Right cardiac atrium (tissue), 5 donors: ENCODE measurements at regions of chr15 and their contacts with region 1.

Region 1: GRCh38 chr15:74768771-74769342 is 13.0 kb upstream of the CSK start:
- DNase-seq: peak; percentile 67 to 85 (median 78)
- ATAC-seq: peak; percentile 33 to 60
- H3K4me3 ChIP-seq: no peak overlapping the region
- H3K27ac ChIP-seq: no peak overlapping the region
- H3K4me1 ChIP-seq: no peaks in the 10 kb centered on the region
- H3K27me3 ChIP-seq: no peaks in the 10 kb centered on the region

Region 2: DNA sequence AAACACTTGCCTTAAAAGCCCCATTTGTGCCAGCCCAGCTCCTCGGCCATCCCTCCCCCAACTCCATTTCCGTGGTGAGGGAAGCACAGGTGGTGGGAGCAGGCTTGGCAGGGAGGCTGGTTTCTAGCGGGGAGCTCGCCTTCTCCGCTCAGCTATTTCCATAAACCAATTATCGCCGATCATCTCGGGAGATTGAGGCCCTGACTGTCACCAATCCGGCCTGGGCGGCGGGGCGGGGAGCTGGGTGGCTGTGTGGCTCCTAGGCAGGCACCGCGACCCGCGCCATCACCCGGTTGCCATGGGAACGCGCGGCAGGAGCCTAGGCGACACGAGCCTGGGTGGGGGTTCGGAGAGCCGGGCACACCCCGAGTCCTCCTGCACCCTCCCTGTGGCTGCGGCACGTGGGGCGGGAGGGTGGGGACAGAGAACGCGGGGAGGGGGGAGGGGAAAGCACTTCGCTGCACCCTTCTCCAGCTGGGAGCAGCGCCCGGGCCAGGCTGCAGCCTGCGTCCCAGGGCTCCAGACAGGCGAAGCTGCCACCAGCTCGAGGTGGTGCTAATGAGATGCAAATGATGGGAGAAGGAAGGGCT is 523.4 kb before region 1 on chr15:
- intact Hi-C with region 1: no loop called
- DNase-seq: peak in 2 of 3 donors; percentile 65 to 76
- ATAC-seq: peak in 1 of 2 donors; percentile 15
- H3K4me3 ChIP-seq: no peak overlapping the region
- H3K27ac ChIP-seq: no peak overlapping the region
- H3K4me1 ChIP-seq: peaks cover 10% of the 10 kb centered on the region
- H3K27me3 ChIP-seq: no peaks in the 10 kb centered on the region

Region 3: DNA sequence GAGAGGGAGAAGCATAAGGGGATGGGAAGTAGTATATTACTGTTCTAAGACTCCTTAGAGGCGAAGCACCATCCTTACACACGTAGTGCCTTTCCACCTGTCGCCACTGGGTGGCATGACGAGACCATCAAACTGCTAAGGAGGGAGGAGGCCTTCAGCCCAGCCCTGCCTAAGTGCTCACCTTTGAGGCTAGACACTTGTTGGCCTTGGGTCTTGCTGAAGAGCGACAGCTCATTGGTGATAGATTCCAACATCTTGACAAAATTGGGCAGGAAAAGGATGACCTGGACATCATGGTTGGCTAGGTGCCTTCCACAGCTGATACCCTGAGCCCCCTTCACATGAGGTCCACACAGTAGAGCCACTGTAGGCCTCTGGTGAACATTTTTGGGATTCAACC is 133.6 kb before region 1 on chr15:
- intact Hi-C with region 1: loop called (anchors 2 to 5 kb)
- DNase-seq: peak; percentile 55 to 79 (median 75)
- ATAC-seq: peak; percentile 58 to 72
- H3K4me3 ChIP-seq: no peak overlapping the region
- H3K27ac ChIP-seq: no peak overlapping the region
- H3K4me1 ChIP-seq: no peaks in the 10 kb centered on the region
- H3K27me3 ChIP-seq: no peaks in the 10 kb centered on the region

Region 4: GRCh38 chr15:74739905-74740304 is 29.0 kb before region 1 on chr15:
- intact Hi-C with region 1: no loop called
- DNase-seq: no peak
- ATAC-seq: no peak
- H3K4me3 ChIP-seq: no peak overlapping the region
- H3K27ac ChIP-seq: no peak overlapping the region
- H3K4me1 ChIP-seq: no peaks in the 10 kb centered on the region
- H3K27me3 ChIP-seq: no peaks in the 10 kb centered on the region

Region 5: GRCh38 chr15:74835307-74835823 is 66.5 kb after region 1 on chr15:
- intact Hi-C with region 1: loop called in 1 of 4 experiments (anchors 5 kb)
- DNase-seq: peak in 2 of 3 donors; percentile 77 to 83
- ATAC-seq: peak; percentile 4 to 41
- H3K4me3 ChIP-seq: no peak overlapping the region
- H3K27ac ChIP-seq: no peak overlapping the region
- H3K4me1 ChIP-seq: peaks cover 3% of the 10 kb centered on the region
- H3K27me3 ChIP-seq: no peaks in the 10 kb centered on the region

Region 6: DNA sequence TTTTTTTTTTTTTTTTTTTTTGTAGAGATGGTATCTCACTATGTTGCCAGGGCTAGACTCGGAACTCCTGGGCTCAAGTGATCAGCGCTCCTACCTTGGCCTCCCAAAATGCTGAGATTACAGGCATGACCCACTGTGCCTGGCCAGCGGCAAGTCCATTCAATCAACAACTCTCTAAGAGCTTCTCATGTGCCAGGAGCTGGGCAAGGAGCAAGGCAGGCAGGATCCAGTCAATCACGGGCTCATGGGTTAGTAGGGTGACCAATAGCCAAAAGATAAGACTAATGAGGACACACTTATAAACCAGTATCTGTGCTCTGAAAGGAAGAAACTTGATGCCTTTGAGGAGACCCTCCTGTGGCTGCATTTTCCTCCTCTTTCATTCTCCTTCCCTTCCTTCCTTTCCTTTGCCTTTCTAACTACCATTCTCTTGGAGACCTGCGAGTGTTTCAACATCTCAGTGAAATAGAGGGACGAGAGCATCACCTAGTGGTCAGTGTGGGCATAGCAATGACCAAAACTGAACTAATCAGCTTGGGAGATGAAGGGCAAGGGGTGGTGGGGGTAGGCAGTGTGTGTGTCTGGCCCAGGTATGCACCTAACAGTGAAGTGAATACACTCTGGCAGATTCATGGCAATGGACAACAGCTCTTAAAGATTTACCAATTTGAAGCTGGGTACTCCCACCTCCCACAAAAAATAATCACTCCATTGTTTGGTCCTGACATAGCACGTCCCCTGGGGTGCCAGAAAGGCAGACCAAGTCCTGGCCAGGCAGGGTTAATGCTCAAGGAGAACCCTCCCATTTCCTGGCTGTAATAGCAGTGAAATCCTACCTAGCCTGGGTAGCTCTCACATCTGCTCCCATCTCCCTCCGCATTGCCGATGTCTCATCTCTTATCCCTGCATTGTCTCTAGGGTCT is 181.5 kb after region 1 on chr15:
- intact Hi-C with region 1: loop called (anchors 2 to 5 kb)
- DNase-seq: peak; percentile 59 to 79 (median 73)
- ATAC-seq: peak; percentile 61 to 71
- H3K4me3 ChIP-seq: no peak overlapping the region
- H3K27ac ChIP-seq: no peak overlapping the region
- H3K4me1 ChIP-seq: no peaks in the 10 kb centered on the region
- H3K27me3 ChIP-seq: no peaks in the 10 kb centered on the region